Dendritic cell treated with granulocyte-macrophage colony-stimulating factor and Interleukin-4, amounts not matched to agents 40 ng/mL and 50 ng/mL, for 4 days (primary cell): ENCODE measurements at regions of chr1 and their contacts with region 1.

Region 1: DNA sequence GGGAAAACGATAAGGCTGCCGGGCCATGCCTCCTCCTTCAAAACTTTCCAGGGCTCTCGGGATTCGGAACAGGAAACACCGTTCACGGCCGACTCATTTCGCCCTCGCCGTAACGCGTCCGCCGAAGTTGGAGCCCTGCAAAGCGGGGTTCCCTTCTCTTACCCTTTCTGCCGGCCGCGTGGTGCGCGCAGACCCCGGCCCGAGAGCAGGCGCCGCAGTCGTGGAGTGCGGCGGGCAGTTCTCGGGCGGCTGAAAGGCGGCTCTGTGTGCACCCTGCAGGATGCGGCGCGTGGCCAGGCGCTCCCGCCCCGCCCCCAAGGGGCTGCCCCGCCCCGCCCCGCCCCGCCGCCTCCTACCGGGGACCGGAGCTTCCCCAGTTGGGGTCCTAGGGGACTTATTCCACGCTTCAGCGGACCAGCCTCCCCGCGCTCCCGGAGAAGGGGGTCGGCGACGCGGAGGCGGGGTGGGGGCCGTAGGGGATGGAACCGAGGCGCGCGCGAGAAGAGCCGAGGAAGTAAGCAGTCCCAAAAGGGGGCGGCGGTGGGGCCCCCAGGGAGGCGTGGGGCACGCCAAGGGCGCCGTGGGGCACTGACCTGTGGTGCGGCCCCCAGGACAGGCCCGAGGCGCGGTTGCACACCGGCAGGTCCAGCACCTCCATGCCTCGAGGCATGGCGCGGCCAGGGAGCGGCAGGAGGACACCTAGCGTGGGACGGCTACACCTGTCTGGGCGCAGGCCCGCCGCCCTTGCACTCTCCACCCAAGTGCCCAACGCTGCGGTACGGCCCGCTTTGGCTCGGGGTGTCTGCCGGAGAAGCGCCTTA is at the start of gene MCOLN2:
- H3K4me3 Mint-ChIP-seq: peak within 1 kb of the TSS; percentile 87
- H3K27ac Mint-ChIP-seq: peak within 1 kb of the TSS; percentile 63
- H3K4me1 Mint-ChIP-seq: peaks cover 38% of the 10 kb centered on the region
- H3K27me3 Mint-ChIP-seq: peaks cover 26% of the 10 kb centered on the region

Region 2: GRCh38 chr1:84781946-84782771 is 214.9 kb before region 1 on chr1:
- intact Hi-C with region 1: no loop called
- H3K4me3 Mint-ChIP-seq: no peak overlapping the region
- H3K27ac Mint-ChIP-seq: no peak overlapping the region
- H3K4me1 Mint-ChIP-seq: peaks cover 19% of the 10 kb centered on the region
- H3K27me3 Mint-ChIP-seq: no peaks in the 10 kb centered on the region

Region 3: DNA sequence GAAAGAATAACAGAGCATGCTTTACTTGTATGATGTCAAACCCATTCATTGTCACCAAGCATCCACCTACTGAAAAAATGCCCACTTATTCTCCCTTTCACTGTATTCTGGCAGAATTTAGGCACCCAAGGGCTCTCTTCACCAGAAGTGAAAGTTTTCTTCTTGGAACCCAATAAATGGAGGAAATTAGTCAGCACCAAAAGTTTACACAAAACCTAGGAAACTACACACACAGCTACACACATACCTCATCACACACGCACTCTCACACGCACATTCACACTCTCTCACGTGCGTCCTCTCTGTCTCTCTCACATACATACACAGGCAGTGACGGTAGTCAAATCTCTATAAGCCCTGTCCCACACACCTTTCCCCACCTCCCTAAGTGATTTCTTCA is 37.8 kb before region 1 on chr1:
- intact Hi-C with region 1: loop called (anchors 5 kb)
- H3K4me3 Mint-ChIP-seq: no peak overlapping the region
- H3K27ac Mint-ChIP-seq: no peak overlapping the region
- H3K4me1 Mint-ChIP-seq: peaks cover 6% of the 10 kb centered on the region
- H3K27me3 Mint-ChIP-seq: peaks cover 3% of the 10 kb centered on the region

Region 4: DNA sequence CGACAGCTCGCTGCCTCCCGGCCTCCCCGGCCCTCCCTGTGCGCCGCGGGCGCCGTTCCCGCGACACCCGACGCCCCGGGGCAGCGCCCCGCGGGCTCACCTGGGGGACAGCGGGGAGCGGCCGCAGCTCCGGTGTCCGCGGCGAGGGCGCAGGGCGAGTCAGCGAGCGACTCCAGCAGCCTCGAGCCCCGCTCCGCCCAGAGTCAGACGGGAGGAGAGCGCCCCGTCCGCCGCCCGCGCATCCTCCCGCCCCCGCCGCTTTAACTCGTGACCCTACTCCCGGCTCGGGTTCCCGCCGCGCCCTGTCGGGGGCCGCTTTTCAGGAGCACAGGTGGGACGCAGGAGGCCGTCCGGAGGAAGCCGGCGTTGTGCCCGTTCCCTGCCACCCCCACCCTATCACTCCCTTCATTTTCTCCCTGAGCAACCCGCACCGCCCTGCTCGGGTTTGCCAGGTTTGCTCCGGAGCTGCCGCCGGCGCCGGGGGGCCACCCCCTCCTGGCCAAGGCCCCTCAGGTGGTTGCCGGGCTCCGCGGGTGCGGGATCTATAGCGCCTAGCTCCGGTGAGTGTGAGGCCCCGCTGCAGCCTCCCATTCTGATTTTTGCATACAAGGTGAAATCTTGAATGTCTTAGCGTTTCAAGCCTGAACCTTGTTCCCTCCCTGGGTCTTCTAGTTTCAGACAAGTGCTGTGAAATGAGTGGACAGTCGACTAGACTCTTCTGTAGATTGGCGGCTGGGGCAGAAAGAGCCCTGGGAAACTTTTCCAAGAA is 51.4 kb after region 1 on chr1 and contains the start of gene MCOLN3:
- intact Hi-C with region 1: loop called (anchors 5 kb)
- H3K4me3 Mint-ChIP-seq: peak within 1 kb of the TSS; percentile 73
- H3K27ac Mint-ChIP-seq: no peak within 1 kb of the TSS
- H3K4me1 Mint-ChIP-seq: peaks cover 6% of the 10 kb centered on the region
- H3K27me3 Mint-ChIP-seq: peaks cover 69% of the 10 kb centered on the region